ENCODE measurements at regions of chr11 and their contacts with region 1.

Region 1: GRCh38 chr11:79708300-79708932 is 267.6 kb upstream of the TENM4 start:
- DNase-seq: peak; percentile 23
- CTCF ChIP-seq: peak; percentile 64

Region 2: GRCh38 chr11:79287952-79288351 is 420.5 kb before region 1 on chr11:
- in situ Hi-C with region 1: no loop called
- DNase-seq: no peak
- CTCF ChIP-seq: no peak

Region 3: GRCh38 chr11:80155412-80156017 is 447.1 kb after region 1 on chr11:
- in situ Hi-C with region 1: loop called (anchors 25 kb)
- DNase-seq: peak; percentile 15
- CTCF ChIP-seq: peak; percentile 50

Measured in GM13977 (cell line).